Prostate gland (tissue), 2 donors: ENCODE measurements at regions of chr10 and their contacts with region 1.

Region 1: GRCh38 chr10:102503281-102504220 is at the start of gene SUFU:
- DNase-seq: peak; percentile 99
- H3K4me3 ChIP-seq: peak within 1 kb of the TSS; percentile 88 to 95
- H3K27ac ChIP-seq: peak within 1 kb of the TSS; percentile 87 to 89
- H3K4me1 ChIP-seq: peaks cover 10% of the 10 kb centered on the region
- H3K27me3 ChIP-seq: no peaks in the 10 kb centered on the region
- CTCF ChIP-seq: peak; percentile 92 to 98 (median 95)
- POLR2A ChIP-seq: peak; percentile 91
- total RNA-seq, gene SUFU: 17.4 to 20.4 TPM

Region 2: GRCh38 chr10:102394079-102394800 is 109.3 kb before region 1 on chr10:
- intact Hi-C with region 1: loop called (anchors 10 kb)
- DNase-seq: peak; percentile 91
- H3K4me3 ChIP-seq: peak overlapping the region; percentile 66 to 80
- H3K27ac ChIP-seq: peak overlapping the region; percentile 97 to 98
- H3K4me1 ChIP-seq: peaks cover 6% of the 10 kb centered on the region
- H3K27me3 ChIP-seq: no peaks in the 10 kb centered on the region
- CTCF ChIP-seq: peak in 3 of 4 experiments; percentile 95 to 98 (median 98)
- POLR2A ChIP-seq: peak; percentile 85

Region 3: GRCh38 chr10:102583435-102584417 is 80.2 kb after region 1 on chr10:
- intact Hi-C with region 1: loop called (anchors 2 kb)
- DNase-seq: peak; percentile 82
- H3K4me3 ChIP-seq: no peak overlapping the region
- H3K27ac ChIP-seq: no peak overlapping the region
- H3K4me1 ChIP-seq: peaks cover 10% of the 10 kb centered on the region
- H3K27me3 ChIP-seq: no peaks in the 10 kb centered on the region
- CTCF ChIP-seq: peak; percentile 59 to 88 (median 84)
- POLR2A ChIP-seq: no peak

Region 4: GRCh38 chr10:102645741-102646609 is 142.4 kb after region 1 on chr10:
- intact Hi-C with region 1: loop called (anchors 2 kb)
- DNase-seq: peak; percentile 73
- H3K4me3 ChIP-seq: peak overlapping the region; percentile 83 to 87
- H3K27ac ChIP-seq: peak overlapping the region; percentile 97 to 99
- H3K4me1 ChIP-seq: peaks cover 31% of the 10 kb centered on the region
- H3K27me3 ChIP-seq: no peaks in the 10 kb centered on the region
- CTCF ChIP-seq: peak in 2 of 4 experiments; percentile 7 to 9
- POLR2A ChIP-seq: peak; percentile 52